ENCODE measurements at regions of chr6 and their contacts with region 1.

Region 1: DNA sequence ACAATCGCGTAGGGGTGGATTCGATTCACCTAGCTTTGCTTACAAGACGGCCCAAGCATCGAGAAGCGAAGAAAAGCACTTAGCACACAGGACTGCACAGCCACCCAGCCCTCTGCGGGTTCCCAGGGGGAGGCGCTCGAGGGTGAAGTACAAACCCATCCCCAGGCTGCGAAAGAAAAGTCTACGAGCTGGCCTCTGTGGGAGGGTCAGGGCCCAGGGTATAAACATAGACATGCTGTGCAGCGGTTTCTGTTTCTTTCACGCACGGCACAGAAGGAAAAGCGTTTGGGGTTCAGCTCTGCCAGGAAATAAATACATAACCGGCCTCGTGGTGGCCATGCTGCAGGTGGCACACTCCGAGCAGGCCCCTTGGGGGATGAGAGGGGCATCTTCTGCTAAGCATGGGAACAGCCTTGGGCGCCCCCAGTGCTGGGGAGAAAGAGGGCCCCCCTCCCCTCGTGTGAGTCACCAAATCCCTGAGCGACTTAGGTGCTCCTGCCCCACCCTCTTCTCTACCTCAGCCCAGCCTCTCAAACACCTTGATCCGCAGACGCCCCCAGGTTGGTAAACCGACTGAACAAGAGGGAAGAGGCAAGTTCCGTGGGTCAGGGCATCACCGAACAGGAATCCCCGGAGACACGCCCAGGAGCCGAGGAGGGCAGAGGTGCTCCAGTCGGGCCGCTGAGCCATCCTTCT is 91.6 kb upstream of the RIPOR2 start:
- DNase-seq: peak; percentile 90
- H3K4me3 Mint-ChIP-seq: peak overlapping the region; percentile 65
- H3K27ac Mint-ChIP-seq: peak overlapping the region; percentile 78
- H3K4me1 Mint-ChIP-seq: peaks cover 52% of the 10 kb centered on the region
- H3K27me3 Mint-ChIP-seq: no peaks in the 10 kb centered on the region

Region 2: DNA sequence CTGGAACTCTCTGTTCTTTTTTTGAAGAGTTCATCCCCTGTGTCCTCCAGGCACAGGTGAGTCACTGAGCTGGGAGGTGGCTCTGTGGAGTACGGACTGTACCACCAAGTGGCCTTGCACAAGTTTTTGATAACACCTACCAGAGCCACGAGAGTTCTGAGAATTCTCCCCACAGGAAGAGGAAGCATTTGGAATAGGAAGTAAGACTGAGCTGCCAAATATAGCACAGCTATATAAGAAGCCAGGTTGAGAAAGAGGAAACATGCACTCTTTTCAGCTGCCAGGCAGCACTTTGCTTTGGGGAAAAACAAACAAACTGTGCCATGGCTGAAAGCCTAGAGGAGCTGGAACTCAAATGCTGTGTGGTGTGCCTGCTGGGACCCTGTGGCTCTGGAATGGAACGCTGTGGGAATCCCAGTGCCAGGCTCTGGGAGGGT is 20.8 kb before region 1 on chr6:
- CTCF ChIA-PET with region 1: interaction called, 5 read pairs
- intact Hi-C with region 1: loop called (anchors 1 kb)
- DNase-seq: peak; percentile 72
- H3K4me3 Mint-ChIP-seq: peak overlapping the region; percentile 31
- H3K27ac Mint-ChIP-seq: peak overlapping the region; percentile 68
- H3K4me1 Mint-ChIP-seq: peaks cover 80% of the 10 kb centered on the region
- H3K27me3 Mint-ChIP-seq: no peaks in the 10 kb centered on the region

Region 3: DNA sequence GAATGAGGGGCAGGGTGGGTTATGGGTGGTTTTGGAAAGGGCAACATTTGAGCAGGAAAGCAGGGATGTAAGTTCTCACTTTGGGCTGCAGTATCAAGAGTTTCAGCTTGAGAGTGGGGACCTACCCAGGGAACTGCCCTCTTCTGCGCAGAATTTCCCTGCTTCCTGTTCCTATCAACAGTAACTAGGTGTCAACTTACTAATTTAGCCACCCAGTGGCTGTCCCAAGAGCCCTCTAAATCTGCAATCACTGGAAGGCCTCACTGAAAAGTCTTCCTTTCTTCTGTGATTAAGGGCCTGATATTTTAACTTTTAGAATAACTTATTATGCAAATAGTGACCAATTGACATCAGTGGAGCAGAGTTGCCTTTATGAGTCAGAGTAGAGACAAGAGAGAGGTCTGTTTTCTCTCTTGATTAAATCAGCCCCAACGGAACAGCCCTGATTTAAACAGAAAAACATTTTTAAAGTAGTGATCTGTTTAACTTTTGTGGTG is 26.6 kb after region 1 on chr6:
- CTCF ChIA-PET with region 1: interaction called, 41 read pairs
- intact Hi-C with region 1: loop called (anchors 1 kb)
- DNase-seq: peak; percentile 68
- H3K4me3 Mint-ChIP-seq: no peak overlapping the region
- H3K27ac Mint-ChIP-seq: peak overlapping the region; percentile 83
- H3K4me1 Mint-ChIP-seq: peaks cover 79% of the 10 kb centered on the region
- H3K27me3 Mint-ChIP-seq: no peaks in the 10 kb centered on the region

Region 4: DNA sequence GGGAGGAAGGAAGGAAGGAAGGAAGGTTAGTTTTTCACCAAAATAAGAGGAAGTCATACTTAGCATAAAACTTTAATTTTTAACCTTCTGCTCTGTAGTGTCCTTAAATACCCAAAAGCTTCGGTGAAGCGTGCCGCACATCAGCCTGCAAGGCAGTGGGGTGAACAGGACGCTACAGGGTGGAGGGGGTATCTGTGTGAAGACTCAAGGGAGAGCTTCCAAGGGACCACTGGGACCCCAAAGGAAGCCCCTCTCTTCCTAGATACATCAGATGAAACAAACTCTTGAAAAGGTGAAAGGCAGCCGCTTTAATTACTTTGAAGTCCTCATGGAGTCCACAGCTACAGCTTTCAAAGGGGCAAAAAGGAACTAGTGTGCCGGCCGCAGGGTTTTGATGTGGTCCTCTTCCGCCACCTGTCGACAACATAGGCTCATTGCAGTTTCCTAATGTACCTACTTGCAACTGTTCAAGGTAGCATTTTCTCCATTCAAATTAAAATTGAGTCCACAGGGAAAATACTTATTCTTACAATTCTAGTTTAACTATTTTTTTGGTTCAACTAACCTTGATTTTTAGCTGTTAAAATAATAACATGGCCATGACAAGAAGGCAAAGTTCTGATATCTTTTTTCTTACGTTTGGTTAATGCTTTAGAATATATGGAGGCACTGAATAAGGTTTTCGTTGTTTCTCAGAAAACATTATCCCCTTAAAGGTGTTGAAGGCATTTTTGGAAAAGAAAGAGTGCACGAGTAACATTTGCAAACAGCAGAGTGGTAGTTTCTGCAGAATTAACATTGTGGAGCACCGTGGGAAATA is 43.4 kb after region 1 on chr6:
- CTCF ChIA-PET with region 1: interaction called, 106 read pairs
- intact Hi-C with region 1: loop called (anchors 1 kb)
- DNase-seq: peak; percentile 91
- H3K4me3 Mint-ChIP-seq: peak overlapping the region; percentile 38
- H3K27ac Mint-ChIP-seq: peak overlapping the region; percentile 70
- H3K4me1 Mint-ChIP-seq: peaks cover 10% of the 10 kb centered on the region
- H3K27me3 Mint-ChIP-seq: no peaks in the 10 kb centered on the region

Region 5: GRCh38 chr6:25103603-25104002 is 76.2 kb after region 1 on chr6:
- CTCF ChIA-PET with region 1: no interaction called
- intact Hi-C with region 1: no loop called
- DNase-seq: no peak
- H3K4me3 Mint-ChIP-seq: no peak overlapping the region
- H3K27ac Mint-ChIP-seq: no peak overlapping the region
- H3K4me1 Mint-ChIP-seq: peaks cover 6% of the 10 kb centered on the region
- H3K27me3 Mint-ChIP-seq: no peaks in the 10 kb centered on the region

Region 6: DNA sequence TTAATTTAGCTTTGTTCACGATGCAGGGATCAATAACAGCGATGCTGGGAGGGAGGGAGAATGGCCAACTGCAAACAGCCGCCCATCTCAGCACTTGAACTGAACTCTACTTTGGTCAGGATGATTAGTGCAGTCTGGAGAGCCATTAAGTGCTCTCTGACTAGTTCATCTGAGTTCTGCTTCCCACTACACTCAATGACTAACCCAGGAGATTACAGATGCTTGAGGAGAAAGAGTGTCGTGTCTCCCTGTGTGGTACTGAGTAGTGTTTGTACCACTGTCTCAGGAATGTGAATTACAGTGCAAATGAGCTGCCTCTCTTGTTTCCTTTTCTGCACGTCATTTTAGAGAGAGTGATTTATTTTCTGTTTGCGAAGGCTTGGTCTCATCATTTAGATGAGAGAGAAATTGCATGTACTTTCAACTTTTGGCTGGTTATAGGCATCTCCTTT is 275.3 kb after region 1 on chr6:
- CTCF ChIA-PET with region 1: no interaction called
- intact Hi-C with region 1: no loop called
- DNase-seq: no peak
- H3K4me3 Mint-ChIP-seq: no peak overlapping the region
- H3K27ac Mint-ChIP-seq: no peak overlapping the region
- H3K4me1 Mint-ChIP-seq: peaks cover 13% of the 10 kb centered on the region
- H3K27me3 Mint-ChIP-seq: no peaks in the 10 kb centered on the region